Activated CD4-positive, alpha-beta memory T cell treated with anti-CD3 and anti-CD28 coated beads, Interleukin-2, amount 10 ng/mL, durations not matched to agents 7 days and 5 days (primary cell): ENCODE measurements at regions of chr1 and their contacts with region 1.

Region 1: DNA sequence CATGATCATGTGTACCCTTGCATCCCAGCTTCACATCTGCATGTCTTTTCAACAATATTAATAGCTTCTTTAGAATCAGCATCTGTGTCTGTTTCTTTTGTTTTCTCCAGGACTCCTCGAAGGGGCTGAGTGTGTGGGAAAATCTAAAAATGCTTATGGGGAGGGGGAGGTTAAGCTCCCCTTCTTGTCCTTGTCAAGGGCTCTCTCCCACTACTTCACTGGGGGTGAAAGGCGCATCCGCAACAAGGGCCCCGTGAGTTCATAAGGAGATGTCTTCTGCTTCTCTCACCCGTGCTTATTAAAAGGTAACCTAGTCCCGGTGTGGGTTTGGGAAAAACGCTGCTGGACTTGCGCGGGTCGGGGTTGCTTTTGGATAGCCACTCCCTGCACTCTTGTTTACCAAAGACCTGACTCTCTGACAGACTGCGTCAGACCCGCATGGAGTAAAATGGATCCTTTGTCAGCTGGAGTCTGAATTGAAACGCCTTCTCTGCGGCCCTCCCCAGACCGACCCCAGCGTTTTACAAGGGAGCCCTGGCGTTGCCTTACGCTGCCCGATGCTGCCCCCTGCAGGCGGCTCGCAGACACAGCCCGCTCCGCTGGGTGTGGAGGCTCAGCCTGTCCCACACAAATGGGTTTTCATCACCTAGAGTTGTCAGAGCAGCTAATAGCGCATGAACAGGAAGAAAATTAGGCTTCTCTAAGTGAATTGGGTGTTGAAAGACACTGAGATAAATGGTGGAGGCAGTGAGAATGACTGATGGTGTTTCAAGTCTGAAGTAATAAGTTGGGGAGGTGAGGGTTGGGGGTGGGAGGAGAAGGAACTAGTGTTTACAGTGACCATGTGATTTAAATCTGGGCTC is 53.8 kb downstream of the IER5 start:
- DNase-seq: peak; percentile 91
- H3K4me3 Mint-ChIP-seq: peak overlapping the region; percentile 51
- H3K27ac Mint-ChIP-seq: peak overlapping the region; percentile 69
- H3K4me1 Mint-ChIP-seq: peaks cover 59% of the 10 kb centered on the region
- H3K27me3 Mint-ChIP-seq: peaks cover 18% of the 10 kb centered on the region

Region 2: GRCh38 chr1:180881806-180882509 is 260.4 kb before region 1 on chr1:
- CTCF ChIA-PET with region 1: interaction called, 15 read pairs
- POLR2A ChIA-PET with region 1: no interaction called
- DNase-seq: no peak
- H3K4me3 Mint-ChIP-seq: no peak overlapping the region
- H3K27ac Mint-ChIP-seq: no peak overlapping the region
- H3K4me1 Mint-ChIP-seq: no peaks in the 10 kb centered on the region
- H3K27me3 Mint-ChIP-seq: no peaks in the 10 kb centered on the region

Region 3: GRCh38 chr1:181033799-181034451 is 108.4 kb before region 1 on chr1 and contains the start of gene MR1:
- CTCF ChIA-PET with region 1: interaction called, 149 read pairs
- POLR2A ChIA-PET with region 1: interaction called, 39 read pairs
- DNase-seq: peak; percentile 43
- H3K4me3 Mint-ChIP-seq: peak within 1 kb of the TSS; percentile 91
- H3K27ac Mint-ChIP-seq: peak within 1 kb of the TSS; percentile 94
- H3K4me1 Mint-ChIP-seq: peaks cover 53% of the 10 kb centered on the region
- H3K27me3 Mint-ChIP-seq: no peaks in the 10 kb centered on the region
- total RNA-seq, gene MR1: 36.4 to 36.5 TPM

Region 4: DNA sequence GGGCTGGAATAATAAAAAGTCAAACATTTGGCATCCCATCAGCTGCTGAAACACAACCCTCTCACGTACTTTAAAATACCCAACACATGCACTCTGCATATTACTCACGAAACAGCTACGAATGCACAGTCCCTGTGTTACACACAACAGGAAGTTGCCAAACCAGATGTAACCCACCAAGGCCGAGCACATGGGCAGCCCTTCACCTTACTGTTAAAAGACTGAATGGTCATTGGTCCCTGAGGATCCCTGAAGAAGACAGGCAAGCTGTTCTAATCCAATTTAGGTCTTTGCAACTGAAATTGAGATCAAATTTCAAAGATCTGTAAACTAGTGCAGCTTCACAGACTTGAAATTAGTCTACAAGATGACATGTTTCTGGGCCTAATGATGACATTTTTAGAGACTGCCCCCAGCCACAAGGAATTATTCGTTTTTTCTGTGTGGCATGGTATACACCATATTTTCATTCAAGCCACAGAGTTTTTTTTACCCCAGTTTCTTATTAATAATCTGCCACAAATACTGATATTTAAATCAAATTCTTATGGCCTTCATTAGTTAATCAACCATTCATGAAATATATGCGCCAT is 79.4 kb before region 1 on chr1:
- CTCF ChIA-PET with region 1: interaction called, 17 read pairs
- POLR2A ChIA-PET with region 1: interaction called, 8 read pairs
- DNase-seq: peak; percentile 57
- H3K4me3 Mint-ChIP-seq: peak overlapping the region; percentile 65
- H3K27ac Mint-ChIP-seq: peak overlapping the region; percentile 79
- H3K4me1 Mint-ChIP-seq: peaks cover 25% of the 10 kb centered on the region
- H3K27me3 Mint-ChIP-seq: peaks cover 2% of the 10 kb centered on the region

Region 5: DNA sequence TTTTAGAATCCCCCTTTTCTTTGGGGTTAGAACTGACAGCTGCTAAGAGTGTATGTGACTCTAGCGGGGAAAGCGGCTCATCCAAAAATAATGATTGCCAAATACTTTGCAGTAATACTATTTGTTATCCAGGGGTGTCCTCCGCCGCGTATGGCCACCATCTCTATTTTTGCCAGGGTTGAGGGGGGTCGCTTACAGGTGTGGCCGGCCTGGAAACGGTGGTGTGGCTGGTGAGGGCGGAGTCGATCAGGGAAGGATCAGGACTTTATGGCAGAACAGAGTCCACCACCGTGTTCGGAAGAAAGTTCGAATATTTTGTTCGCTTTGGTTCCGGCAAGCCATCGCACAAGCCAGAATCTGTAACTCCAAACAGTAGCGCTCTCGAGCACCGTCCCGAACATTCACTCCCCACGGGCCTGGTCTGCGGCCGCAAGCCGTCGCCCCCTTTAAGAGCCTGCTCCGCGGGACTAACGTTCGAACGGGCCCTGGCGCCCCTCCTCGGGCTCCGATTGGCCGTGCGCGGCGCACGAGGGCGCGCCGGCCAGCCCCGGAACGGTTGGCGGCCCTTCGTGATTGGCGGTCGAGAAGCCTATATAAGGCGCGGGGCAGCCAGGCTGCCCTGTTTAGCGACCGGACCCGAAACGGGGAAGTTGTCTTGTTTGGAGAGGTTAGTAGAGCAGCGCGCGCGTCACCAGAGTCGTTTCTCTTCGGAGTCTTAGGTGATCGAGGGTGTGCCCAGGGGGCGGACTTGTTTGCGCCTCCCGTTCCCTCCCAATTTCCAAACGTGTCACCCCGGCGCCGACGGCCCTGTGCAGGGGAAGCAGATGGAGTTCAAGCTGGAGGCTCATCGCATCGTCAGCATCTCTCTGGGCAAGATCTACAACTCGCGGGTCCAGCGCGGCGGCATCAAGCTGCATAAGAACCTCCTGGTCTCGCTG is 54.0 kb before region 1 on chr1 and contains the start of gene IER5:
- CTCF ChIA-PET with region 1: interaction called, 97 read pairs
- POLR2A ChIA-PET with region 1: interaction called, 322 read pairs
- DNase-seq: peak; percentile 98
- H3K4me3 Mint-ChIP-seq: peak within 1 kb of the TSS; percentile 99
- H3K27ac Mint-ChIP-seq: peak within 1 kb of the TSS; percentile 98
- H3K4me1 Mint-ChIP-seq: peaks cover 55% of the 10 kb centered on the region
- H3K27me3 Mint-ChIP-seq: peaks cover 3% of the 10 kb centered on the region
- total RNA-seq, gene IER5: 41.6 to 43.9 TPM

Region 6: DNA sequence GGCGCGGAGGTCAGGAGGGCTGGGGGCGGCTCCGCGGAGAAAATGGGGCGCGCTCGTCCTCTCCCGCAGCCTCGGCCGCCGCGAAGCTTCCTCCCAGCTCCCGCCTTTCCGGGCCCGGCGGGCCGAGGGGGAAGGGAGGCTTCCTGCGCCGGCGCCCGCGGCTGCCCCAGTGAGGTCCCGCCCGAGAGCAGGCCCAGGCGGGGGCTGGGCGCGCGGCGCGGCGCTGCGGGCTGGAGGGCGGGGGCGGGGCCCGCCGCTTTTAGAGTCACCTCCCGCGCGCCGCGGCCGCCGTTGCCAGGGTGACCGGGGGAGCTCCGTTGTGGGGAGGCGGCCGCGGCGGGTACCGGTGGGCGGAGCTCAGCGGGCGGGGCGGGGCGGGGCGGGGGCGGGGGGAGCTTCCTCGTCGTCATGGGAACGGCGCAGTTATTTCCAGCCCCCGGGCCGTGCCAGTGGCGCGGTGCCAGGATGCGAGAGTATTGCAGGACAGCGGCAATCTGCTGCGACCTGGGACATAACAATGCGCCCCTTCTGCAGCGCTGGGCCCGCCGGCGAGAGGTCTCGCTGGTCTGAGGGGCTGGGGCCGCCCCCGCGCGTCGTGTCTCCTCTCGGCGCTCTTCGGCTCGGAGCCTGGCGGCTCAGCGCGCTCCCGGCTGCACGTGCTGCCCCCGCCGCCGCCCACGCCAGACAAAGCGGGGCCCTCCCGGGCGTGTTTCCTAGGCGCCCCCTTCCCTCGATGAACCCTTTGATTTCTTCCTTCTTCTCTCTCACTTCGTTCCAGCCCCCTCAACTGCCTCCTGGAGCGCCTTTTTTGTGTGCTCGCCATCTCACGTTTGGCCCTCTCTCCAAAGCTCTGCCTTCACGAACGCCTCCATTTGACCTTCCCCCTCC is 36.9 kb before region 1 on chr1:
- CTCF ChIA-PET with region 1: interaction called, 60 read pairs
- POLR2A ChIA-PET with region 1: interaction called, 50 read pairs
- DNase-seq: peak; percentile 94
- H3K4me3 Mint-ChIP-seq: peak overlapping the region; percentile 78
- H3K27ac Mint-ChIP-seq: peak overlapping the region; percentile 51
- H3K4me1 Mint-ChIP-seq: peaks cover 69% of the 10 kb centered on the region
- H3K27me3 Mint-ChIP-seq: peaks cover 35% of the 10 kb centered on the region

Region 7: DNA sequence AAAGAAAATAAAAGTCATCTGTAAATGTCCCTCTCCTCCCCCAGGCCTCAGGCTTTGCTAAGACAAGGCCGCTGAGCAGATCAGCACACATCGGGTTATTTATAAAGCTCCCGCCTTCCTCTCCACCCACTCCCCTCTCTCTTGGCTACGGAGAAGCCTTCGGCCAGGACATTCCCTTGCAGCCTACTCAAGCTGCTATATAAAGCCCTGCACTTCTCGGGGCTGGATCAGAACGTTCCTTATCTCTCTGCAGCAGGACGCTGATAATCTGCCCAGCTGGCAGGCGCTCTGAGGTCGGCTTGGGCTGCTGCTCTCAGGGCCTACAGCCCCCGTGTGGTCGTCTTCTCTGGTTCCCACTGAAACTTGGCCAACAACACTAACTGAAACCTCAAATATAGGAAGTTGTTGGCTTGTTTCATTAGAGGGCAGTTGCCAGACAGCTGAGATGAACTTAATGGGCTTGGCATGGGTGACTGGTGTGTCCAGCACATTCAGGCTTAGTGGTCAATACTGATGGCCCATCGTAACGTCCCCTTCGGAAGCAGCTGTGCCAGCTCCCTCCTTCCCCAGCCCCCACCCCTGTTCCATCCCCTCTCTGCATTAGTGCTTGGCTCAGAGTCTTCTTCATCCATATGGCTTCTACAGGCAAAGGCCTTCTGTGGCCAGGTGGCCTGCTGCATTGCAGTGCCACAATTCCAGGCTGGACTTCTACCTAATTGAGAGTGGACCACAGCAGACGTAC is 10.7 kb after region 1 on chr1:
- CTCF ChIA-PET with region 1: interaction called, 40 read pairs
- POLR2A ChIA-PET with region 1: interaction called, 16 read pairs
- DNase-seq: no peak
- H3K4me3 Mint-ChIP-seq: no peak overlapping the region
- H3K27ac Mint-ChIP-seq: no peak overlapping the region
- H3K4me1 Mint-ChIP-seq: peaks cover 51% of the 10 kb centered on the region
- H3K27me3 Mint-ChIP-seq: peaks cover 28% of the 10 kb centered on the region

Region 8: GRCh38 chr1:181206513-181206912 is 64.2 kb after region 1 on chr1:
- CTCF ChIA-PET with region 1: no interaction called
- POLR2A ChIA-PET with region 1: no interaction called
- DNase-seq: no peak
- H3K4me3 Mint-ChIP-seq: no peak overlapping the region
- H3K27ac Mint-ChIP-seq: no peak overlapping the region
- H3K4me1 Mint-ChIP-seq: no peaks in the 10 kb centered on the region
- H3K27me3 Mint-ChIP-seq: peaks cover 12% of the 10 kb centered on the region

Region 9: DNA sequence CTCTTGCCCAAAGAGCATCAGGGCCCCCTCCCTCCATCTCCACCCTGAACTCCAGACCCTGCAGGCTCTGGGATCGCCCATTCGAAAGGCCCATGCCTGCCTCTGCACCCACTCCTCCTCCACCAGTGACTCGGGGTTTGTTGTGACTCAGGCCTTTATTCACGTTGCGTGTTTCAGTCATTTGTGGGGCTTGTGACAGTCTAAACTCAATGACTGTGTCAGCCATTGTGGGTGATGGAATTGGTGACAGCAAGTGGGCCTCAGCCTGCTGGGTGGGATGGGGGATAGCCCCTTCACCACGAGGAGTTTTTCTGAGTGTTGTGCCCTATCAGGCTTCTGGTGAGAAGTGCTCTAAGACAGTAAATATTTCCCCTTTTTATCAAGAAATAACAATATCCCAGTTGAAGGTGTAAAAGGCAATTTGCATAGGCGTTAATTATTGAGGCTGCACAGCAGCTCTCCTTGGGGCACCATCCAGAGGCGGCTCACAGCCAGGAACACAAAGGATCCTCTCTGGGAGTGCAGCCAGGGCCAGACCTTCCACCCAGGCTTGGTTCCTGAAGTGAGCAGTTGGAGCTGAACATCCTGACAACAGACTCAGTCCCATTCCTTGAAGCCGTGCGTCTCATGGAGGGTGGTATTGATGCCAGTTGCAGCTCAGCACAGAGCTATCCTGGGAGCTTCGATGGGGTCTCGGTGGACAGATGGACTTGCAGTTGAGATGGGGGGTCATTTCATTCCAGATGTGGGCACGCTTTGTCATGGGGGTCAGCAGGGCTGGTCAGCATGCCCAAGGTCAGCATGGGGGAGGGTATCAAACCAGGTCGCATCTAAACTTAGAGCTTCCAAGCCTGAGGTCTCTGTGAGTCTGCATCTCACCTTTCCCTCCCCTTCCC is 205.4 kb after region 1 on chr1:
- CTCF ChIA-PET with region 1: no interaction called
- POLR2A ChIA-PET with region 1: no interaction called
- DNase-seq: no peak
- H3K4me3 Mint-ChIP-seq: no peak overlapping the region
- H3K27ac Mint-ChIP-seq: no peak overlapping the region
- H3K4me1 Mint-ChIP-seq: no peaks in the 10 kb centered on the region
- H3K27me3 Mint-ChIP-seq: no peaks in the 10 kb centered on the region